Gastrocnemius medialis (tissue), 4 donors: ENCODE measurements at regions of chrX and their contacts with region 1.

Region 1: GRCh38 chrX:56113785-56114436 is 118.2 kb upstream of the KLF8 start:
- DNase-seq: no peak
- ATAC-seq: no peak
- H3K4me3 ChIP-seq: no peak overlapping the region
- H3K27ac ChIP-seq: no peak overlapping the region
- H3K4me1 ChIP-seq: no peaks in the 10 kb centered on the region
- H3K27me3 ChIP-seq: peaks cover 0 to 8% (median 0%) of the 10 kb centered on the region in 3 donors
- CTCF ChIP-seq: no peak
- POLR2A ChIP-seq: no peak

Region 2: DNA sequence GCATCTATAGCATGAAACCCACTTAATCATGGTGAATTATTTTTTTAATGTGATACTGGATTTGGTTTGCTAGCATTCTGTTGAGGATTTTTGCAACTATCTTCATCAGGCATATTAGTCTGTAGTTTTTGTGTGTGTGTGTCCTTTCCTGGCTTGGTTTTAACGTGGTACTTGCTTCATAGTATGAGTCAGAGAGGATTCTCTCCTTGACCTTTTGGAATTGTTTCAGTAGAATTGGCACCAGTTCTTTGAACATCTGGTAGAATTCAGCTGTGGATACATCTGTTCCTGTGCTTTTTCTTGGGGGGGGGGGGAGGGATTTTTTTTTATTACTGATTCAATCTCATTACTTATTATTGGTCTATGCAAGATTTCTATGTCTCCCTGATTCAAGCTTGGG is 113.7 kb before region 1 on chrX:
- in situ Hi-C with region 1: loop called in 1 of 4 experiments (anchors 25 kb)
- intact Hi-C with region 1: no loop called
- DNase-seq: no peak
- ATAC-seq: no peak
- H3K4me3 ChIP-seq: no peak overlapping the region
- H3K27ac ChIP-seq: no peak overlapping the region
- H3K4me1 ChIP-seq: no peaks in the 10 kb centered on the region
- H3K27me3 ChIP-seq: no peaks in the 10 kb centered on the region
- CTCF ChIP-seq: no peak
- POLR2A ChIP-seq: no peak

Region 3: DNA sequence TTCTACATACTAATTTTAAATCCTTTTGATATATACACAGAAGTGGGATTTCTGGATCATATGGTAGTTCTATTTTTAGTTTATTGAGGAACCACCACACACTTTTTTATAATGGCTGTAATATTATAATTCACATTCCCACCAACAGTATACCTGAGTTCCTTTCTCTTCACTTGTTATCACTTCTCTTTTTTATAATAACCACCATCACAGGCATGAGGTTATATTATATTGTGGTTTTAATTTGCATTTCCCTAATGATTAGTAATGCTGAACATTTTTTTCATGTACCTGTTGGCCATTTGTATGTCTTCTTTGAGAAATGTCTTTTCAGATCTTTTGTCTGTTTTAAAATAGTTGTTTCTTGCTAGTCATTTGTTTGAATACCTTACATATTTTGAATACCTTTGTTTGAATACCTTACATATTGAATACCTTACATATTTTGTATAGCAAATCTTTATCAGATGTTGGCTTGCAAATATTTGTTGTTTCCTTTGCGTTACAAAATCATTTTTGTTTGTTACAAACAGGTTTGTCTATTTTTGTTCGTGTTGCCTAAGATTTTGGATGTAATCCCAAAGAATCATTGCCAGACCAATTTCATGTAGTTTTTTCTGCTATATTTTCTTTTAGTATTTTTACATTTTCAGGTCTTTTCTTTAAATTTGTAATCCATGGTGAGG is 80.3 kb before region 1 on chrX:
- in situ Hi-C with region 1: no loop called
- intact Hi-C with region 1: no loop called
- DNase-seq: no peak
- ATAC-seq: no peak
- H3K4me3 ChIP-seq: no peak overlapping the region
- H3K27ac ChIP-seq: no peak overlapping the region
- H3K4me1 ChIP-seq: no peaks in the 10 kb centered on the region
- H3K27me3 ChIP-seq: no peaks in the 10 kb centered on the region
- CTCF ChIP-seq: no peak
- POLR2A ChIP-seq: no peak

Region 4: GRCh38 chrX:56066016-56066415 is 47.9 kb before region 1 on chrX:
- in situ Hi-C with region 1: no loop called
- intact Hi-C with region 1: no loop called
- DNase-seq: no peak
- ATAC-seq: no peak
- H3K4me3 ChIP-seq: no peak overlapping the region
- H3K27ac ChIP-seq: no peak overlapping the region
- H3K4me1 ChIP-seq: no peaks in the 10 kb centered on the region
- H3K27me3 ChIP-seq: no peaks in the 10 kb centered on the region
- CTCF ChIP-seq: no peak
- POLR2A ChIP-seq: no peak

Region 5: DNA sequence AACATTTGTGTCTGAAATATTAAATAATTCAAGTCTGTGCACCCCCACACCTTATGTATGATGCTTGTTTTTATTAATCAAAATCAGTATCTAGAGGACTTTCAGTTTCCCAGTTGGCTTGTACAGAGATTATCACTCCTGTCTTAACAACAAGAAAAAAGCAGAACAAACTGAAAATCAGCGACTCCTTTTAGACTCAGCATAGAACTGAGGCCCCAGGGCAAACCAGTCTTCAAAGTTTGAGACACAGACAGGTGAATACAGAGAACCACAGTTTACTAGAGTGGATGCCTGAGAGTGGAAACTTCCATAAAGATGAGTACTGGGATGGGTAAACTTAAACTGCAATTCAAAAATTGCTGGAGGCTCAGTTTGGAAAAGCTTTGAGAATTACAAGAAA is 24.5 kb before region 1 on chrX:
- in situ Hi-C with region 1: no loop called
- intact Hi-C with region 1: no loop called
- DNase-seq: no peak
- ATAC-seq: no peak
- H3K4me3 ChIP-seq: no peak overlapping the region
- H3K27ac ChIP-seq: no peak overlapping the region
- H3K4me1 ChIP-seq: no peaks in the 10 kb centered on the region
- H3K27me3 ChIP-seq: no peaks in the 10 kb centered on the region
- CTCF ChIP-seq: no peak
- POLR2A ChIP-seq: no peak